Astrocyte of the cerebellum (primary cell): ENCODE measurements at regions of chr4 and their contacts with region 1.

Region 1: DNA sequence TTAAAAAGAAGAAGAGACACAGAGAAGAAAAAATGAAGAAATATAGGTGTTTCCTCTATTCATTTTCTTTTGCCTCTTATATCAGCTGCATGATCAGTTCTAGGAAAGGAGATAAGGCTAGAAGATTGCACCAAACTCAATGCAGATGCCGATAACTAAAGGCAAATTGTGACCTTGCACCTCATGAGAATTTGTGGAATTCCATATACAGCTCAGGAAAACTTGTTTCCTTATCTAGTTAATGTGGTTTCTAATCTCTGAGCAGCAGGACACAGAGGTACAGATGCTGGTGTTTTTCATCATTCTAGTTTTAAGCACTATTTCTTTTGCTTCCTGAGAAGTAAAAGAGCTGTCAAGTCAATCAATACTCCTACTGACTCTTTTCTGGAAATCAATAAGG is 104.6 kb upstream of the NWD2 start:
- DNase-seq: no peak
- H3K4me3 ChIP-seq: no peak overlapping the region
- CTCF ChIP-seq: no peak

Region 2: GRCh38 chr4:37188100-37188499 is 48.1 kb after region 1 on chr4:
- in situ Hi-C with region 1: loop called (anchors 5 kb)
- DNase-seq: no peak
- H3K4me3 ChIP-seq: no peak overlapping the region
- CTCF ChIP-seq: no peak